Activated T-helper 1 cell treated with anti-CD3 and anti-CD28 coated beads, Interleukin-12 subunit alpha, Interleukin-12 subunit beta, Interleukin-2, Interleukin-4 antibody, amounts not matched to agents 30 ng/mL and 10 ng/mL and 1 ng/mL, durations not matched to agents 14 hours and 24 hours and 36 hours (primary cell): ENCODE measurements at regions of chr3 and their contacts with region 1.

Region 1: DNA sequence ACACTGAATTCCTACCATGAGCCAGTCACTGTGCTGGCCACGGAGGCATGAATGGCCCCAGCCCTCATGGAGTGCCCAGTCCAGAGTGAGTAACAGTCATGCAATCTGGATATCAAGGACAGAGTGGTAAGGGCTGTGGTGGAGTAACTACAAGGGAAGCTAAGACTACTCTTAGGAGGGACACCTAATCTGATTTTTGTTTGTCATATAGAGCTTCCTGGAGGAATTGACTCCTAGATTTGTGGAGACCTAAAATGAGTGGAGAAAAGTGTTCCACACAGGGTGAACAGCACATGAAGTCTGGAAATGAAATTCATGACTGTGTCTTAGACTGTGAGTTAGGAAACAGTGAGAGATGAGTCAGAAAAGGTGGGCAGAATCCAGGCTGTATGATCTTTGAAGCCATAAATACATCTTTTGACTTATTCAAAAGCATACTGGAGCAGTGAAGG is 219.9 kb downstream of the NFKBIZ start:
- DNase-seq: no peak
- H3K4me3 Mint-ChIP-seq: no peak overlapping the region
- H3K27ac Mint-ChIP-seq: no peak overlapping the region
- H3K4me1 Mint-ChIP-seq: peaks cover 16% of the 10 kb centered on the region
- H3K27me3 Mint-ChIP-seq: no peaks in the 10 kb centered on the region

Region 2: GRCh38 chr3:102024270-102024904 is 44.9 kb before region 1 on chr3:
- intact Hi-C with region 1: loop called (anchors 5 kb)
- DNase-seq: no peak
- H3K4me3 Mint-ChIP-seq: no peak overlapping the region
- H3K27ac Mint-ChIP-seq: no peak overlapping the region
- H3K4me1 Mint-ChIP-seq: peaks cover 9% of the 10 kb centered on the region
- H3K27me3 Mint-ChIP-seq: peaks cover 2% of the 10 kb centered on the region